PC-9 (cell line): ENCODE measurements at regions of chr10 and their contacts with region 1.

Region 1: DNA sequence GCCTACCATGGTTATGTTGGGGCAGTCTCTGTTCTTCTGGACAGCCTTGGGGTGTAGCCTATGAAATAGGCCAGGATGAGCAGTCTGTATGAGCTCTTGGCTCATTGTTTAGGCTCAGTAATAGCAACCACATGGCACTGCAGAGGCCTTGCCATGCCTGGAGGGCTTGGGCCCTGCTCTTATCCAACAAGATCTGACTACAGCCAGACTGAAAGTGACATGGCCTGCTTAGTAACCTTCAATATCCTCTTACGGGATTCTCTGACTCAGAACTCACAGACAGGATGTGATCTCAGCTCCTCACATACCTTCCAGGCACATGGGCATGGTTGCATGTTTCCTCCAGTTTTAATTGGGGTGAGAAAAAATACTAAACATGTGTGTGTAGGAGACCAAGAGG is 289.3 kb downstream of the PTEN start:
- DNase-seq: peak; percentile 61 to 83
- H3K4me3 ChIP-seq: no peak overlapping the region
- H3K27ac ChIP-seq: peak overlapping the region; percentile 69
- H3K4me1 ChIP-seq: peaks cover 38% of the 10 kb centered on the region
- H3K27me3 ChIP-seq: no peaks in the 10 kb centered on the region
- CTCF ChIP-seq: no peak

Region 2: DNA sequence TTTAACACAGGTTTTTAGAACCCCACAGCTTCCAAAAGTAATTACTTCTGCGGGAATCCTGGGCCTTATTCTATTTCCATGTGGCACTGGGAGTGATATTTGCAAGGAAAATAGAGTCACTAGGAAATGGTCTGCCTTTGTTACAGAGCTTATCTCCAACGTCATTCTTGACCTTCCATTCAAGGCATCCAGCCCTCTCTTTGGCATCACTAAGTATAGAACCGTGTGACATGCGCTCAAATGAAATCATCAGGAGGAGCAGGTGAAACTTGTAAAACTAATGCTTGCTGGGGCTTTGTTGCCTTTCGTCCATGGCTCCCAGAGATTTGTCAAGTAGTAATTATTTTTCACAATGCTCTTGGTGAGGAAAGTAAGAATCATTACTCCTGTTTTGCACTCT is 419.6 kb before region 1 on chr10:
- CTCF ChIA-PET with region 1: no interaction called
- POLR2A ChIA-PET with region 1: no interaction called
- intact Hi-C with region 1: no loop called
- DNase-seq: no peak
- H3K4me3 ChIP-seq: no peak overlapping the region
- H3K27ac ChIP-seq: no peak overlapping the region
- H3K4me1 ChIP-seq: no peaks in the 10 kb centered on the region
- H3K27me3 ChIP-seq: no peaks in the 10 kb centered on the region
- CTCF ChIP-seq: no peak

Region 3: GRCh38 chr10:87961046-87961713 is 191.5 kb before region 1 on chr10:
- CTCF ChIA-PET with region 1: no interaction called
- POLR2A ChIA-PET with region 1: no interaction called
- intact Hi-C with region 1: loop called (anchors 10 kb)
- DNase-seq: peak in 1 of 2 experiments; percentile 64
- H3K4me3 ChIP-seq: 0 out of 2 replicates have a peak overlapping the region, but pooled peaks have one; percentile 17
- H3K27ac ChIP-seq: peak overlapping the region; percentile 72
- H3K4me1 ChIP-seq: peaks cover 27% of the 10 kb centered on the region
- H3K27me3 ChIP-seq: no peaks in the 10 kb centered on the region
- CTCF ChIP-seq: no peak

Region 4: GRCh38 chr10:88042160-88043100 is 110.3 kb before region 1 on chr10:
- CTCF ChIA-PET with region 1: no interaction called
- POLR2A ChIA-PET with region 1: no interaction called
- intact Hi-C with region 1: loop called (anchors 1 kb)
- DNase-seq: peak; percentile 52 to 67
- H3K4me3 ChIP-seq: no peak overlapping the region
- H3K27ac ChIP-seq: no peak overlapping the region
- H3K4me1 ChIP-seq: peaks cover 29% of the 10 kb centered on the region
- H3K27me3 ChIP-seq: no peaks in the 10 kb centered on the region
- CTCF ChIP-seq: no peak

Region 5: GRCh38 chr10:88243836-88244730 is 91.4 kb after region 1 on chr10:
- CTCF ChIA-PET with region 1: no interaction called
- POLR2A ChIA-PET with region 1: no interaction called
- intact Hi-C with region 1: loop called (anchors 10 kb)
- DNase-seq: peak in 1 of 2 experiments; percentile 34
- H3K4me3 ChIP-seq: no peak overlapping the region
- H3K27ac ChIP-seq: no peak overlapping the region
- H3K4me1 ChIP-seq: 0 out of 2 replicates have a peak, but pooled peaks cover 5% of the 10 kb centered on the region
- H3K27me3 ChIP-seq: no peaks in the 10 kb centered on the region
- CTCF ChIP-seq: no peak